ENCODE measurements at regions of chr5 and their contacts with region 1.

Region 1: DNA sequence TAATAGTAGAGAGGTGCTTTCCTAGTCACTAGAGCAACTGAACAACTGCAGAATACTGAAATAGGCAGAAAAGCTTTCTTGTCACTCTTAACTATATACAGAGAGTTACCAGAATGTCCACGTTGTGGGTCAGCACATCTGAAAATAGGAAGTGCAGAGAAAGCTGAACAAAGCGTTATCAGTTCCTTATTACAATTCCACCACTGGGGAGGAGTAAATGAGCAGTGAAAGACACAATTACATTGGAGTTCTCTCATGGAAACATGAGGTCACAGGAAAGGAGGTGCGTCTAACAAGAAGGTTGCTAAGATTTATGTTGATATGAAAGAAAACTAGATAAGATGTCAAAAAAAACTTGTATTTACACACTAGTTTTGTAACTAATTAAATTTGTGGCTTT is 461.9 kb upstream of the COX7C start:
- DNase-seq: no peak
- ATAC-seq: no peak
- H3K4me3 ChIP-seq: no peak overlapping the region
- H3K4me3 Mint-ChIP-seq: no peak overlapping the region
- H3K27ac ChIP-seq: no peak overlapping the region
- H3K27ac Mint-ChIP-seq: no peak overlapping the region
- H3K4me1 ChIP-seq: no peaks in the 10 kb centered on the region
- H3K4me1 Mint-ChIP-seq: no peaks in the 10 kb centered on the region
- H3K27me3 ChIP-seq: no peaks in the 10 kb centered on the region
- H3K27me3 Mint-ChIP-seq: no peaks in the 10 kb centered on the region
- CTCF ChIP-seq: no peak

Region 2: GRCh38 chr5:84614906-84615305 is 1540.9 kb before region 1 on chr5:
- CTCF ChIA-PET with region 1: no interaction called
- POLR2A ChIA-PET with region 1: no interaction called
- intact Hi-C with region 1: loop called in 1 of 2 experiments (anchors 5 kb)
- DNase-seq: no peak
- ATAC-seq: no peak
- H3K4me3 ChIP-seq: no peak overlapping the region
- H3K4me3 Mint-ChIP-seq: no peak overlapping the region
- H3K27ac ChIP-seq: no peak overlapping the region
- H3K27ac Mint-ChIP-seq: no peak overlapping the region
- H3K4me1 ChIP-seq: no peaks in the 10 kb centered on the region
- H3K4me1 Mint-ChIP-seq: no peaks in the 10 kb centered on the region
- H3K27me3 ChIP-seq: no peaks in the 10 kb centered on the region
- H3K27me3 Mint-ChIP-seq: no peaks in the 10 kb centered on the region
- CTCF ChIP-seq: no peak

Region 3: DNA sequence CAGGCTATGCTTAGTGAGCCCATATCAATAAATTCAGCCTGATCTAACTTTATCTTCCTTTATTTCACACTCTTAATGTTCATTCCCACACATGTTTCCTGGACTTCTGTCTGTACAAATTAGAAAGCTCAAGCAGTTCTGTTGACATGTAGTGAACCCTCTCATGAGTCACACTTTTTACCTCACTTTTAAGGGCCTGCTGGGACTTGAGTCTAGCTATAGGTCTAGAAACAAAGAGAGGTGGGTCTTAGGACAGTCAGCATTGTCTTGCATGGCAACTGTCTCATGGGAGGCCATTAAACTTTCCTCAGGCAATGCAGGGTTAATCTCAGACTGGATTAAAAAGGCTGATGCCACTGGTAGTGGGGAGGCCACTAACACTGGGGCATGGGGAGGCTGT is 1265.5 kb after region 1 on chr5:
- CTCF ChIA-PET with region 1: no interaction called
- POLR2A ChIA-PET with region 1: no interaction called
- intact Hi-C with region 1: no loop called
- DNase-seq: no peak
- ATAC-seq: no peak
- H3K4me3 ChIP-seq: no peak overlapping the region
- H3K4me3 Mint-ChIP-seq: no peak overlapping the region
- H3K27ac ChIP-seq: no peak overlapping the region
- H3K27ac Mint-ChIP-seq: no peak overlapping the region
- H3K4me1 ChIP-seq: no peaks in the 10 kb centered on the region
- H3K4me1 Mint-ChIP-seq: no peaks in the 10 kb centered on the region
- H3K27me3 ChIP-seq: no peaks in the 10 kb centered on the region
- H3K27me3 Mint-ChIP-seq: no peaks in the 10 kb centered on the region
- CTCF ChIP-seq: no peak